HCT116 (cell line): ENCODE measurements at regions of chr17 and their contacts with region 1.

Region 1: GRCh38 chr17:45135192-45135977 is at the start of gene ACBD4:
- DNase-seq: peak; percentile 96
- ATAC-seq: peak; percentile 73
- H3K4me3 ChIP-seq: peak within 1 kb of the TSS; percentile 41 to 50
- H3K27ac ChIP-seq: peak within 1 kb of the TSS; percentile 38; the same call in 1 of the 2 replicates
- H3K4me1 ChIP-seq: peaks cover 16 to 36% of the 10 kb centered on the region in 2 experiments
- H3K27me3 ChIP-seq: no peaks in the 10 kb centered on the region
- CTCF ChIP-seq: peak; percentile 100
- POLR2A ChIP-seq: no peak
- RAD21 ChIP-seq: peak; percentile 100
- total RNA-seq, gene ACBD4: 13.6 TPM

Region 2: GRCh38 chr17:44556832-44557606 is 578.4 kb before region 1 on chr17 and contains the start of gene FZD2:
- CTCF ChIA-PET with region 1: no interaction called
- POLR2A ChIA-PET with region 1: no interaction called
- RAD21 ChIA-PET with region 1: no interaction called
- intact Hi-C with region 1: no loop called
- DNase-seq: peak; percentile 91
- ATAC-seq: peak; percentile 91
- H3K4me3 ChIP-seq: peak within 1 kb of the TSS; percentile 68 to 71
- H3K27ac ChIP-seq: peak within 1 kb of the TSS; percentile 62
- H3K4me1 ChIP-seq: peaks cover 3 to 14% of the 10 kb centered on the region in 2 experiments; a peak in 3 of 4 replicates
- H3K27me3 ChIP-seq: no peaks in the 10 kb centered on the region
- CTCF ChIP-seq: no peak
- POLR2A ChIP-seq: no peak
- RAD21 ChIP-seq: no peak
- total RNA-seq, gene FZD2: 12.8 TPM

Region 3: GRCh38 chr17:44775136-44775837 is 360.1 kb before region 1 on chr17:
- CTCF ChIA-PET with region 1: interaction called, 5 read pairs
- POLR2A ChIA-PET with region 1: no interaction called
- RAD21 ChIA-PET with region 1: interaction called in 1 of 2 experiments, 3 read pairs
- intact Hi-C with region 1: loop called (anchors 10 kb)
- DNase-seq: peak; percentile 97
- ATAC-seq: peak; percentile 91
- H3K4me3 ChIP-seq: peak overlapping the region; percentile 62 to 67
- H3K27ac ChIP-seq: peak overlapping the region; percentile 69
- H3K4me1 ChIP-seq: peaks cover 3 to 30% of the 10 kb centered on the region in 2 experiments; a peak in 3 of 4 replicates
- H3K27me3 ChIP-seq: no peaks in the 10 kb centered on the region
- CTCF ChIP-seq: no peak; a peak in 1 of 6 replicates
- POLR2A ChIP-seq: peak; percentile 69
- RAD21 ChIP-seq: no peak

Region 4: DNA sequence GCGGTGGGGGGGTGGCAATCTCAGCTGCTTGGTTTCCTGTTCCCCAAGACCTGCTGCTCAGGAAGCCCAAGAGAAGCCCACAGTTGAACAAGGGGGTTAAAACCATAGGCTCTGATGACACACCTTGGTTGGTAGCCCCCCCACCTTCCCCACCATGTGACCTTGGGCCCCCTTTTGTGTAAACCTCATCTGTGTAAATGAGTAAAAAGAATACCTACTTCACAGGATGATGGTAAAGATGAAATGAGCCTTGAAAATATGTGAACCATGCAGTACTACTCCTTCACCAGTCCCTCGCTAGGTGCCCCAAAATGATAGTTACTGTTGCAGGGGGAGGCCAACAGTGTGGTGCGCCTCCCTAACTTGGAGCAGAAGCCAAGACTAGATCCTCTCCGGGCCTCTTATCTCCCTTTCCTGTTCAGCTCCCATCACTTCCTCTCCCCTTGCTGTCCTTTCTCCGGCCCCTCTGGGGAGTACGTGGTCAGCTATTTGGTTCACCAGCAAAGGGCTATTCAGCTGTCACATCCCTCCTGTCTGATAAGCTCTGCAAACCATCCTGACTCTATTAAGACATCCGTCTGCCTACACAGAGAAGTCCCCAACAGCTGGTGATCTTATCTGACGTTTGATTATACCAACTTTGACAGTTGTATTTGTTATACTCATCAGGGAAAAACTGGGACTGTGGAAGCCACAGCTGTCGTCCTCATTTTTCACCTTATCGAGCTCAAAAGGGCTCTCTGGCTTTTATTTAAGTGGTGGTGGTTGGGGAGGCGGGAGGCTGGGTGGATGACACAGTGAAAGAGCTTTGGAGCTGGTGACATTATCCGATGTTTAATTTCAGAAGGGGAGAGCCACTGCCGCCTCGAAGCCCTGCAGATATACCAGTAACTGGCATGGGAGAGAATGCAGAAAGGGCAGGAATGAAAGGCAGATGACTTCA is 103.9 kb before region 1 on chr17:
- CTCF ChIA-PET with region 1: no interaction called
- POLR2A ChIA-PET with region 1: no interaction called
- RAD21 ChIA-PET with region 1: no interaction called
- intact Hi-C with region 1: no loop called
- DNase-seq: no peak
- ATAC-seq: no peak
- H3K4me3 ChIP-seq: no peak overlapping the region
- H3K27ac ChIP-seq: no peak overlapping the region
- H3K4me1 ChIP-seq: no peaks in the 10 kb centered on the region
- H3K27me3 ChIP-seq: no peaks in the 10 kb centered on the region
- CTCF ChIP-seq: no peak
- POLR2A ChIP-seq: no peak
- RAD21 ChIP-seq: no peak

Region 5: DNA sequence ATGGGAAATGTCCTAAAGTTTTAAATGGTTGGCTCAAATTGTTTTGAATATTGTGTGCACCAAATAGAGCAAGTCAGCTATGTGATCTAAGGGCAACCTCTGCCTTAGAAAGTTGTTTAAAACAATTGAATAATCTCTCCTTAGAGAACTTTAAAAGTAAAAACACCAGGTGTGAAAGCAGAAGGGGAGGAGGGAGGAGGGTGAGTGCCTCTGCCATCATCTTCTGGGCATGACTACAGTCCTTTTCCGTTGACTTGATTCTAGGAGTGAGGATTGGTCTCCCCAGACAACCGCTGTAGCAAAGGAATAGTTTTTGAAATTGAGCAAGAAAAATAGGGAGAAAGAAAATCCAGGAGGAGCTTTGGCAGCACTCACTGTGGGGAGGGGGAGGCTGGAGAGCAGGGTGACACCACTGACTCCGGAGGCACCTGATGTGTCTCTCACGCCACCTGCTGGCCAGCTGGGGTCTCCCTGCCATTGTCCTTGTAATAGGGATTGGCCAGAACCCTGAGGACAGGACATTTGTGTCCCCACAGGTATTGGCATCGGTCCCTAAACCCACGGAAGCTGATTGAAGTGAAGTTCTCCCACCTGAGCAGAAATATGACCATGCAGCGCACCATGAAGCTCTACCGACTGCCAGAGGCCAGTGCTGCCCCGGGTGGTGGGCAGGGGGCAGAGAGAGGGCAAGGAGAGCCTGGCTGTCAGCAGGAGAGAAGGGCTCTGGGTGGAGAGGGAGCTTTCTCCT is 36.3 kb before region 1 on chr17:
- CTCF ChIA-PET with region 1: interaction called, 6 read pairs
- POLR2A ChIA-PET with region 1: no interaction called
- RAD21 ChIA-PET with region 1: no interaction called
- intact Hi-C with region 1: loop called (anchors 1 kb)
- DNase-seq: peak; percentile 51
- ATAC-seq: peak; percentile 96
- H3K4me3 ChIP-seq: no peak overlapping the region
- H3K27ac ChIP-seq: peak overlapping the region; percentile 19; the same call in 1 of the 2 replicates
- H3K4me1 ChIP-seq: peaks cover 0 to 3% of the 10 kb centered on the region in 2 experiments; a peak in 1 of 4 replicates
- H3K27me3 ChIP-seq: no peaks in the 10 kb centered on the region
- CTCF ChIP-seq: peak; percentile 73 to 94 (median 92)
- POLR2A ChIP-seq: no peak
- RAD21 ChIP-seq: peak; percentile 72

Region 6: GRCh38 chr17:45148183-45149036 is 13.0 kb after region 1 on chr17 and contains the start of gene HEXIM1:
- CTCF ChIA-PET with region 1: interaction called, 131 read pairs
- POLR2A ChIA-PET with region 1: interaction called, 32 read pairs
- RAD21 ChIA-PET with region 1: interaction called in 1 of 2 experiments, 3 read pairs
- intact Hi-C with region 1: no loop called
- DNase-seq: peak; percentile 99
- ATAC-seq: peak; percentile 82
- H3K4me3 ChIP-seq: peak within 1 kb of the TSS; percentile 95 to 96
- H3K27ac ChIP-seq: peak within 1 kb of the TSS; percentile 94
- H3K4me1 ChIP-seq: peaks cover 21 to 37% of the 10 kb centered on the region in 2 experiments
- H3K27me3 ChIP-seq: no peaks in the 10 kb centered on the region
- CTCF ChIP-seq: no peak
- POLR2A ChIP-seq: peak; percentile 100
- RAD21 ChIP-seq: no peak
- total RNA-seq, gene HEXIM1: 58.0 TPM

Region 7: GRCh38 chr17:45197555-45198334 is 62.4 kb after region 1 on chr17:
- CTCF ChIA-PET with region 1: interaction called, 157 read pairs
- POLR2A ChIA-PET with region 1: interaction called, 18 read pairs
- RAD21 ChIA-PET with region 1: interaction called, 25 read pairs
- intact Hi-C with region 1: loop called (anchors 1 kb)
- DNase-seq: peak; percentile 81
- ATAC-seq: peak; percentile 96
- H3K4me3 ChIP-seq: no peak overlapping the region
- H3K27ac ChIP-seq: peak overlapping the region; percentile 53
- H3K4me1 ChIP-seq: peaks cover 12 to 31% of the 10 kb centered on the region in 2 experiments; a peak in 3 of 4 replicates
- H3K27me3 ChIP-seq: no peaks in the 10 kb centered on the region
- CTCF ChIP-seq: peak; percentile 98 to 99 (median 99)
- POLR2A ChIP-seq: no peak
- RAD21 ChIP-seq: peak; percentile 100

Region 8: DNA sequence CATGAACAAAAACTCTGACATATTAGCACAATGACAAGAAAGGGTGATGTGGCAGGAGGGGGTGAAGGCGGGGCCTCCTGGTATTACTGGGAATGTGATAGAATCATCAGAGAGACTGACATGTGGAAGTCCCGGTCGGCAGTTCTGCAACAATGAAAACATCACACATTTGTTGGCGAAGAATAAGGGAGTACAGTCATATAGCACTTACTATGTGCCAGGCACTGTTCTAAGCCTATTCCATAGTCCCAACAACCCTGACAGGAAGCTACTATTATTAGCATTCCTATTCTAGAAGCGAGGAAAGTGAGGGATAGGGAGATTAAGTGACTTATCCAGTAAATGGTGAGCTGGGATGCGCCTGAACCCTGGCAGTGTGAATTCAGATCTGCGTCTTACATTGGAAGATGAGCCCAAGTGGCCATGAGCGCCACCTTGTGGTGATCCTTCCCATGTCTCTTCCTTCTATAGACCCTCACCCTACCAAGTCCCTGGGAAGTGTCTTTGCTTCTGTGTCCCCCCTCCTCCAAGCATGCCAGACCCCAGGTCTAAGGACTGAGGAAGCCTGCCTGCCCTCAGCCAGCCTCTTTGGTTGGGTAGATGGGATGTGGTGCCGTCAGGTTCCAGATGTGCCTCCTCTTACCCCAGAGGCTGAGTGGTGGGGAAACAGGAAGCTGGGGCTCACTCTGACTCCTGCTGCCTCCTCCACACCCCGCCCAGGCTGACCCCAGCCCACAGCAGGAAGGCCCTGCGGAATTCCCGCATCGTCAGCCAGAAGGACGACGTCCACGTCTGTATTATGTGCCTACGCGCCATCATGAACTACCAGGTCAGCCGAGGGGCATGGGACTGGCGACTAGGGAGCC is 100.3 kb after region 1 on chr17:
- CTCF ChIA-PET with region 1: interaction called, 55 read pairs
- POLR2A ChIA-PET with region 1: interaction called, 4 read pairs
- RAD21 ChIA-PET with region 1: interaction called, 6 to 7 read pairs
- intact Hi-C with region 1: loop called (anchors 1 kb)
- DNase-seq: peak; percentile 54
- ATAC-seq: peak; percentile 69
- H3K4me3 ChIP-seq: no peak overlapping the region
- H3K27ac ChIP-seq: no peak overlapping the region
- H3K4me1 ChIP-seq: peaks cover 12 to 19% of the 10 kb centered on the region in 2 experiments
- H3K27me3 ChIP-seq: no peaks in the 10 kb centered on the region
- CTCF ChIP-seq: peak; percentile 86 to 88 (median 86)
- POLR2A ChIP-seq: no peak
- RAD21 ChIP-seq: peak; percentile 71